ENCODE measurements at regions of chr10 and their contacts with region 1.

Region 1: GRCh38 chr10:2927958-2928840 is 139.1 kb upstream of the PFKP start:
- DNase-seq: peak; percentile 64
- H3K4me3 ChIP-seq: no peak overlapping the region
- H3K27ac ChIP-seq: no peak overlapping the region
- H3K4me1 ChIP-seq: peaks cover 15% of the 10 kb centered on the region
- H3K27me3 ChIP-seq: no peaks in the 10 kb centered on the region
- CTCF ChIP-seq: peak; percentile 80 to 85
- POLR2A ChIP-seq: no peak

Region 2: DNA sequence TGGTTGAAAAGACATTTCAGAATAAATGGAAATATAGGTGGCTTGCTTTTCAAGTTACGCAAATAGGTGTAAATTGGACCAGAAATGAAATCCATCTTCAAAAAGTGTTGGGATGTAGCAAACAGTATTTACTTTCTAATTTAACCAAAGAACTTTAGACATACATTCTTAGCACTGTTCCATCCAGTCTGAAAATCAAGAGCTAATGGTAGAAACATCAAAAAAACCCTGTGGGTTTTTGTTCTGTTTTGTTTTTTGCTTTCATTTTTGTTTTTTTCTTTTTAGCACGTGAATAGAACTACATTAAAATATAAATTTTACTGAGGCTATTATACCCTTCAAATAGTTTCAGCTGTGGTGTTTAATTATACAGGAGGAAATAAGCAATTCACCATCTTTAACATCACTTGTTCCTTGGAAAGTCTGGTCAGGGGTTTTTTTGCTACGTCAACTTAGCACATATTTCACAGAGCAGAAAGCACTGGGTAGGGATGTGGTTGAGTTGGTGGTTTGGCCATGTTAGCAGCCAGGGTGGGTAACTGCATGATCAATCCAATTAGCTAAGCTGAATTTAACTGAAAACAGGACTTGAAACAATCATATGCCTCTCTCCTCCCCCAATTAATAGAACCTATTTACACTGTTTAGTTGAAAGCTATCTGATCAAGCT is 136.3 kb before region 1 on chr10:
- CTCF ChIA-PET with region 1: no interaction called
- POLR2A ChIA-PET with region 1: no interaction called
- dilution Hi-C with region 1: no loop called
- intact Hi-C with region 1: no loop called
- DNase-seq: no peak
- H3K4me3 ChIP-seq: no peak overlapping the region
- H3K27ac ChIP-seq: no peak overlapping the region
- H3K4me1 ChIP-seq: no peaks in the 10 kb centered on the region
- H3K27me3 ChIP-seq: no peaks in the 10 kb centered on the region
- CTCF ChIP-seq: no peak
- POLR2A ChIP-seq: no peak

Region 3: GRCh38 chr10:2897619-2898508 is 30.3 kb before region 1 on chr10:
- CTCF ChIA-PET with region 1: interaction called, 7 read pairs
- POLR2A ChIA-PET with region 1: no interaction called
- dilution Hi-C with region 1: no loop called
- intact Hi-C with region 1: loop called (anchors 2 kb)
- DNase-seq: peak; percentile 94
- H3K4me3 ChIP-seq: no peak overlapping the region
- H3K27ac ChIP-seq: peak overlapping the region; percentile 81
- H3K4me1 ChIP-seq: peaks cover 15% of the 10 kb centered on the region
- H3K27me3 ChIP-seq: no peaks in the 10 kb centered on the region
- CTCF ChIP-seq: no peak
- POLR2A ChIP-seq: no peak

Region 4: GRCh38 chr10:2972216-2972615 is 44.0 kb after region 1 on chr10:
- CTCF ChIA-PET with region 1: interaction called, 17 read pairs
- POLR2A ChIA-PET with region 1: no interaction called
- dilution Hi-C with region 1: no loop called
- intact Hi-C with region 1: no loop called
- DNase-seq: no peak
- H3K4me3 ChIP-seq: no peak overlapping the region
- H3K27ac ChIP-seq: no peak overlapping the region
- H3K4me1 ChIP-seq: no peaks in the 10 kb centered on the region
- H3K27me3 ChIP-seq: no peaks in the 10 kb centered on the region
- CTCF ChIP-seq: no peak
- POLR2A ChIP-seq: no peak

Region 5: DNA sequence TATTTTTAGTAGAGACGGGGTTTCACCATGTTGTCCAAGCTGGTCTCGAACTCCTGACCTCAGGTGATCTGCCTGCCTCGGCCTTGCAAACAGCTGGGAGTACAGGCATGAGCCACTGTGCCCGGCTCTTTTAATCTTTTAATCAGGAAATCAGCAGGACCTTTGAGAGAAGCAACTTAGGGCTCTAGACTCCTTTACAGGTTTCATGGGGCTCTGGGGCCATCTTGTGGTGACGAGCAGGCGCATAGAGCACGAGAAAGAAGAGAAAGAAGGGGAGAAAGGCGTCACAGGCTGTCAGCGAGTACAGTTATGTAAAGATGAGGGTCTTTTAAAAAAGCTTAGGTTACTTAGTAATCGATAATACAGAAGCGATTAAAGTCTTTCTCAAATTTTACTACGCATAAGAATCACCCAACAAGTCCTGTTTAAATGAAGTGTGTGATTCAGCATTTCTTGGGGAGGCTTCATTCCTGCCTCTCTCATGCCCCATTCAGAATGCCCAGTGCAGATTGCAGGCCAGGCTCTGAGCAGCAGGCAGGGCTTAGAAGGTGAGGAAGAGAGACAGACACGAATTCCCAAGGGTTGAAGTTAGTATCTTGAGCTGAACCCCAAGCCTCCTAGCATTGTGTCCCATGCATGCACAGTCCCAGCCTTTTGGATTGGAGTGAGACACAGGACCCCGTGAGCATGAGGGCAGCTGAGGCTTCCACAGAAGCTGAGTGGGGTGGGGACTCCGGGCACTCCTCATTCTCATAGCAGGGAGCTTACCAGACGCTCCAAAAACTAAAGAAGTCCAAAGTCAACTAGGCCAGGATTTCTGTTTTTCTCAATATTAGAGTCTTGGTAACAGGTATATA is 115.5 kb after region 1 on chr10:
- CTCF ChIA-PET with region 1: interaction called, 102 read pairs
- POLR2A ChIA-PET with region 1: no interaction called
- dilution Hi-C with region 1: no loop called
- intact Hi-C with region 1: loop called (anchors 1 kb)
- DNase-seq: peak; percentile 75
- H3K4me3 ChIP-seq: no peak overlapping the region
- H3K27ac ChIP-seq: no peak overlapping the region
- H3K4me1 ChIP-seq: peaks cover 24% of the 10 kb centered on the region
- H3K27me3 ChIP-seq: peaks cover 1 to 2% of the 10 kb centered on the region in 2 experiments
- CTCF ChIP-seq: peak; percentile 79 to 83
- POLR2A ChIP-seq: no peak